CD14-positive monocyte (primary cell): ENCODE measurements at regions of chr20 and their contacts with region 1.

Region 1: GRCh38 chr20:60009826-60010616 is 51.8 kb downstream of the CDH26 start:
- DNase-seq: no peak
- H3K4me3 ChIP-seq: no peak overlapping the region
- H3K4me3 Mint-ChIP-seq: no peak overlapping the region
- H3K27ac ChIP-seq: no peak overlapping the region
- H3K27ac Mint-ChIP-seq: peak overlapping the region in 5 of 7 donors; percentile 25 to 89 (median 30)
- H3K4me1 ChIP-seq: peaks cover 33 to 39% of the 10 kb centered on the region in 2 donors
- H3K4me1 Mint-ChIP-seq: peaks cover 51% of the 10 kb centered on the region
- H3K27me3 ChIP-seq: no peaks in the 10 kb centered on the region
- H3K27me3 Mint-ChIP-seq: peaks cover 0 to 1% (median 0%) of the 10 kb centered on the region in 3 donors
- CTCF ChIP-seq: no peak

Region 2: GRCh38 chr20:59925939-59926338 is 84.1 kb before region 1 on chr20:
- intact Hi-C with region 1: no loop called
- DNase-seq: no peak
- H3K4me3 ChIP-seq: no peak overlapping the region
- H3K4me3 Mint-ChIP-seq: no peak overlapping the region
- H3K27ac ChIP-seq: no peak overlapping the region
- H3K27ac Mint-ChIP-seq: no peak overlapping the region
- H3K4me1 ChIP-seq: no peaks in the 10 kb centered on the region
- H3K4me1 Mint-ChIP-seq: no peaks in the 10 kb centered on the region
- H3K27me3 ChIP-seq: peaks cover 5 to 6% of the 10 kb centered on the region in 2 donors
- H3K27me3 Mint-ChIP-seq: peaks cover 3 to 14% (median 5%) of the 10 kb centered on the region in 3 donors
- CTCF ChIP-seq: no peak

Region 3: DNA sequence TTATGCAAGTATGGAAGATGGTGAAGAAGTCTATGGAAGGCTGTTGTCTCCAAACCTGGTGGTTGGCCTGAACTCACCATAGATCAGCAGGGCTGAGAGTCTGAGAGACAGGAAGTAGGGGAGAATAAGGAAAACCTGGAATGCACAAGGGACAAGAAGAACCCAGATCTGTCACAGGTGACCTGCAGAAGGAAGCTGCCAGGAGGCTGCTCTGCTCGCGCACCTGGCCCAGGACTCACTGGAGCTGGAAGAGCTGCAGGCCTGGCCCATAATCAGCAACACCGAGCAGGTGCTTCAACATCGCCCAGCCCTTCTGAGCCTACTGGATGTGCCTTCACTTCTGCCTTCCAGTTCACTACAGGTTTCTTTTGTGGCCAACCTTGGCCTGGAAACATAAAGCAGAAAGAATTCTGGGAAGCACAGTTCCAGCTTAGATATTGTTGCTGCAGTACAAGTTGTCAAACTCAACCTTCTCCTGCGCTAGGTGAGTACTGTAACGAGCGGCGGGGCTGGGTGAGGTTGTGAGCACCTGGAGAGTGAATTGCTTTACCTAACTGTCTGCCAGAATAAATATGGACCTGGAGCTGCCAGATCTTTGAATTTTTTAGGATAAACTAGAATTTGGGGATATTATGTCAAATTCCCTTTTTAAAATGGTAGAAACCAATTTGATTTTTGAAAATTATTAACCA is 30.6 kb after region 1 on chr20:
- intact Hi-C with region 1: loop called in 1 of 2 experiments (anchors 5 kb)
- DNase-seq: no peak
- H3K4me3 ChIP-seq: no peak overlapping the region
- H3K4me3 Mint-ChIP-seq: no peak overlapping the region
- H3K27ac ChIP-seq: no peak overlapping the region
- H3K27ac Mint-ChIP-seq: peak overlapping the region in 2 of 7 donors; percentile 2 to 12
- H3K4me1 ChIP-seq: peaks cover 27 to 48% of the 10 kb centered on the region in 2 donors
- H3K4me1 Mint-ChIP-seq: peaks cover 53% of the 10 kb centered on the region
- H3K27me3 ChIP-seq: no peaks in the 10 kb centered on the region
- H3K27me3 Mint-ChIP-seq: no peaks in the 10 kb centered on the region
- CTCF ChIP-seq: no peak

Region 4: GRCh38 chr20:60078351-60079250 is 68.6 kb after region 1 on chr20:
- intact Hi-C with region 1: no loop called
- DNase-seq: peak; percentile 40 to 61 (median 47)
- H3K4me3 ChIP-seq: peak overlapping the region in 1 of 3 experiments; percentile 24
- H3K4me3 Mint-ChIP-seq: peak overlapping the region in 1 of 2 donors; percentile 17
- H3K27ac ChIP-seq: peak overlapping the region; percentile 58 to 79
- H3K27ac Mint-ChIP-seq: peak overlapping the region; percentile 40 to 86 (median 82)
- H3K4me1 ChIP-seq: peaks cover 42 to 47% of the 10 kb centered on the region in 2 donors
- H3K4me1 Mint-ChIP-seq: peaks cover 45% of the 10 kb centered on the region
- H3K27me3 ChIP-seq: no peaks in the 10 kb centered on the region
- H3K27me3 Mint-ChIP-seq: peaks cover 0 to 2% (median 0%) of the 10 kb centered on the region in 3 donors
- CTCF ChIP-seq: no peak

Region 5: DNA sequence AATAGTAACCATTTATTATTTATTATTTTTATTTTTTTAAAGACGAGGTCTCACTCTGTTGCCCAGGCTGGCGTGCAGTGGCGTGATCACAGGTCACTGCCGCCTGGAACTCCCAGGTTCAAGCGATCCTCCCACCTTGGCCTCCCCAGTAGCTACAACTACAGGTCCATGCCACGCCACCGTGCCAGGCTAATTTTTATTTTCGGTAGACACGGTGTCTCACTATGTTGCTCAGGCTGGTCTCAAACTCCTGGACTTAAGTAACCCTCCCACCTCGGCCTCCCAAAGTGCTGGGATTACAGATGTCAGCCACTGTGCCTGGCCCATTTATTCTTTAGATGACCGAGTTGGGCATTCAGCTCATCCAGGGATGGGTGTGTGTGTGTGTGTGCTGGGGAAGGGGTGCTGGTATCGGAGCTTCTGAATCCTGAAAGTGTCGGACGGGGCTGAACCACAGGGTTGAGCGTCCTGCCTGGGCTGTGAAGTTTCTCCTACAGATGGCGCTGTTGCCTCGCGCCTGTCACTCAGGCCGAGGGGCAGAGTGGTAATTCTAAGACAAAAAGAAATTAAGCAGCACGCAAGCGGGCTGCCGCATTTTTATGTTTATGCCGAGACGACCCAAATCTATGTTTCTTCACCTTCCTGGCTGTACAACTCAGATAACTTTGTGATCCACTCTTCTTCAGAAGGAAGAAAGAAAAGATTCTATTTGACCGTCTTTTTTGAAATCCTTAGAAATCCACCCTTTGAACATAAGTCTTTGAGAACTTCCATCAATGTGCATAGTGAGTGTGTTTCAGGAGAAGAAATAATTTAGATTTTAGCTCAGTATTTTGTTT is 201.0 kb after region 1 on chr20:
- intact Hi-C with region 1: no loop called
- DNase-seq: peak; percentile 57 to 64 (median 62)
- H3K4me3 ChIP-seq: no peak overlapping the region
- H3K4me3 Mint-ChIP-seq: peak overlapping the region; percentile 39 to 73
- H3K27ac ChIP-seq: no peak overlapping the region
- H3K27ac Mint-ChIP-seq: peak overlapping the region in 2 of 7 donors; percentile 11 to 26
- H3K4me1 ChIP-seq: no peaks in the 10 kb centered on the region
- H3K4me1 Mint-ChIP-seq: peaks cover 17% of the 10 kb centered on the region
- H3K27me3 ChIP-seq: no peaks in the 10 kb centered on the region
- H3K27me3 Mint-ChIP-seq: peaks cover 2 to 11% (median 2%) of the 10 kb centered on the region in 3 donors
- CTCF ChIP-seq: peak; percentile 96